ENCODE measurements at regions of chr12 and their contacts with region 1.

Region 1: DNA sequence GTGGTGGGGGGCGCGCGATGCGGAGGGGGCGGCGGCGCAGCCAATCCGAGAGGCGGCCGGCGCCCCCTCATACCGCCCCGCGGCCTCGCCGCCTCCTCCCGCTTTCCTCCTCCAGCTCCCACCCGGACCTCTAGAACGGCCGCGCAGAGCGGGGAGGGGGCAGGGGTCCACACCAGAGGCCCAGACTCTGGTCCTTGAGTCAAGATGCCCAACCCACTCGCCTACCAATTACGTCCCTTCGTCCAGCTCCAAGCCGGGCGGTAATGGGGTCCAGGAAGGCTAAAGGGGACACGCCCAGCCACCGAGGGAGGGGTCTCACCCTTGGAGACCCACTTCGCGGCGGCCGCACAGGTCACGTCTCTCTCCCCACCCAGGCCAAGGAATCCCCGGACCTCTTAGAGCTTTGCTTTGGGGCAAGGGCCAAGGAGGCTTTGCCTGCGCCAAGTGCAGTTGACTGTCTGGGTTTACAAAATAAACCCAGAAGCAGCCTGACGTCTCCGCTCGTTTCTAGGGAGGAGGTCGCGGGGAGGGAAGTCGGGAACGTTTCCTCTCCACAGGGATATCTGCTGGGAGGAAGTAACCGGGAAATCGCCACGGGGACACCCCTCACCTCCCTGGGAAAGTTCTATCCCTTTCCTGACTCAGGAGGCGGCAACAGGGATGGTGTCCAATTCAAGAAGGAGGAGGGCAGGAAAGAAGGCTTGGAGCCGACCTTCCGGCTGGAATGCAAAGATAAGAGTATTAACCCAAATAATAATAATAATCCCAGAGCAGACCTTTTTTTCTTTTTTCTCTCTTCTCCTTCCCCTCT is 427 bp upstream of the AMIGO2 start:
- DNase-seq: peak; percentile 55
- H3K4me3 Mint-ChIP-seq: peak overlapping the region; percentile 95
- H3K27ac Mint-ChIP-seq: peak overlapping the region; percentile 67
- H3K4me1 Mint-ChIP-seq: peaks cover 50% of the 10 kb centered on the region
- H3K27me3 Mint-ChIP-seq: no peaks in the 10 kb centered on the region
- CTCF ChIP-seq: no peak

Region 2: DNA sequence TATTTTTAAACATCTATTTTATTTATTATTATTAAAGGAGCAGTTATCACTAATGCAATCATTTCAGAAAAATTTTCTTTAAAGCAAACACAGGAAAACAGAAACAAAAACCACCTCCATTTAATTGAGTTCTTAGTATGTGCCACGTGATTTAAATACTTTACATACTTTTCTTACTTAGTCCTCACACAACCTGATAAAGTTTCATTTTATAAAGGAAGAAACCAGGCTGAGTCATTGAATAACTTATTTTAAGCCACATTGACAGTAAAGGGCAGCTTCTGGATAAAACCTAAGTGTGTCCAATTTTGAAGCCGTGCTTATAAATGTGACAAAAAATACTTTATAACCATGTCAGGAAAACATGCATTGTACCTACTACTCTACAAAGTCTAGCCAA is 57.9 kb before region 1 on chr12:
- CTCF ChIA-PET with region 1: no interaction called
- intact Hi-C with region 1: no loop called
- DNase-seq: no peak
- H3K4me3 Mint-ChIP-seq: no peak overlapping the region
- H3K27ac Mint-ChIP-seq: no peak overlapping the region
- H3K4me1 Mint-ChIP-seq: peaks cover 21% of the 10 kb centered on the region
- H3K27me3 Mint-ChIP-seq: no peaks in the 10 kb centered on the region
- CTCF ChIP-seq: no peak

Region 3: GRCh38 chr12:47147739-47148138 is 67.6 kb after region 1 on chr12:
- CTCF ChIA-PET with region 1: no interaction called
- intact Hi-C with region 1: no loop called
- DNase-seq: no peak
- H3K4me3 Mint-ChIP-seq: no peak overlapping the region
- H3K27ac Mint-ChIP-seq: no peak overlapping the region
- H3K4me1 Mint-ChIP-seq: no peaks in the 10 kb centered on the region
- H3K27me3 Mint-ChIP-seq: no peaks in the 10 kb centered on the region
- CTCF ChIP-seq: no peak

Region 4: DNA sequence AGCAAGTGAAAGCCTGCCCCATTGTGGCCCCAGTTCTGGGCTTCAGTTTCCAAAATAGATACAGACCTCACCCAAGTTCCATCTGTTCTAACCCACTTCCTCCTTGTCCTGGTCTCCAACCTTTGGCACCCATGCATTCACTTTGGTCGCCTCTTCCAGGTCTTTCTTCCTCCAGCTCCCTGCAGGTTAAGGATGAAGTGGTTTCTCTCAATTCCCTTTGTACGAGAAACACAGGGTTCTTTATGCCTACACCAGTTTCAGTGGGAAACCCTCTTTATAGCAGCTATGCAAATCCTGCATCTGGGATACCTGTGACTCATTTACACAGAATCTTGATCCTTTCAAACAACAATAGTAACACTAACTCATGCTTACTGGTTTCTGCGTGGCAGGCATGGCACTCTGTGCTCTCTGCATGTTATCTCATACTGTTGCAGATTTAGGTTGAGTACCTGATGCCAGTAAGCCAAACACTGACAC is 110.1 kb after region 1 on chr12:
- CTCF ChIA-PET with region 1: interaction called, 6 read pairs
- intact Hi-C with region 1: loop called (anchors 2 kb)
- DNase-seq: peak; percentile 42
- H3K4me3 Mint-ChIP-seq: peak overlapping the region; percentile 4
- H3K27ac Mint-ChIP-seq: peak overlapping the region; percentile 99
- H3K4me1 Mint-ChIP-seq: peaks cover 79% of the 10 kb centered on the region
- H3K27me3 Mint-ChIP-seq: no peaks in the 10 kb centered on the region
- CTCF ChIP-seq: no peak

Region 5: GRCh38 chr12:47276621-47277309 is 196.6 kb after region 1 on chr12:
- CTCF ChIA-PET with region 1: interaction called, 9 read pairs
- intact Hi-C with region 1: loop called (anchors 2 kb)
- DNase-seq: peak; percentile 64
- H3K4me3 Mint-ChIP-seq: peak overlapping the region; percentile 8
- H3K27ac Mint-ChIP-seq: peak overlapping the region; percentile 81
- H3K4me1 Mint-ChIP-seq: peaks cover 50% of the 10 kb centered on the region
- H3K27me3 Mint-ChIP-seq: no peaks in the 10 kb centered on the region
- CTCF ChIP-seq: no peak

Region 6: DNA sequence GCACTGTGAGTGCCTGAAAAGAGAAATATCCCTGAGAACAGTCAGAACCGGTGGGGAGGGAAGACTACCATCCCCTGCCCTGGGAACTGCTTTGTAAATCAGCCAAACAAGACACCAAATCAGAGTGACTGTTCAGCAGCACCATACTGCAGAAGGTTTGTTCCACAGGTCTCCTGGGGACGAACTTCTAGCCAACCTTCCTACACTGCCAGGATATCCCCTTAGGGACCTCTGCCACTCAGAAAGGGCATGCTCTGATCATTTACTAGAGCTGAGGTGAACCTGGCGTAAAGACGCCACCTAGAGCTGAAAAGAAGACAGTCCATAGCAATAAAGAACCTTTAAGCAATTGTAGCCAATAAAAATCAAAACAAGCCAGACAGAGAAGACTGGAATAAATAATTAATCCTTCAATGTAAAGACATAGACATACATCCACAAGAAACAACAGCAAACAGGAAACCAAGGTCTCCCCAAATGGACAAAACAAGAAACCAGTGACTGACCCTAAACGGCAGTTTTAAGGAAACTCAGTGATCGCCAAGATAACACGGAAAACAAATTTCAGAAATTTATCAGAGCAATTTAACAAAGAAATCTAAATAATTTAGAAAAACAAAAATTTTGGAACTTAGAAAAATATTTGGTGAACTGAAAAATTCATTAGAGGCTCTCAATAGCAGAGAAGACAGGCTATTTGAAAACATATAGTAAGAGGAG is 227.7 kb after region 1 on chr12:
- CTCF ChIA-PET with region 1: no interaction called
- intact Hi-C with region 1: loop called (anchors 5 kb)
- DNase-seq: peak; percentile 51
- H3K4me3 Mint-ChIP-seq: no peak overlapping the region
- H3K27ac Mint-ChIP-seq: peak overlapping the region; percentile 2
- H3K4me1 Mint-ChIP-seq: peaks cover 16% of the 10 kb centered on the region
- H3K27me3 Mint-ChIP-seq: no peaks in the 10 kb centered on the region
- CTCF ChIP-seq: peak; percentile 38

Region 7: DNA sequence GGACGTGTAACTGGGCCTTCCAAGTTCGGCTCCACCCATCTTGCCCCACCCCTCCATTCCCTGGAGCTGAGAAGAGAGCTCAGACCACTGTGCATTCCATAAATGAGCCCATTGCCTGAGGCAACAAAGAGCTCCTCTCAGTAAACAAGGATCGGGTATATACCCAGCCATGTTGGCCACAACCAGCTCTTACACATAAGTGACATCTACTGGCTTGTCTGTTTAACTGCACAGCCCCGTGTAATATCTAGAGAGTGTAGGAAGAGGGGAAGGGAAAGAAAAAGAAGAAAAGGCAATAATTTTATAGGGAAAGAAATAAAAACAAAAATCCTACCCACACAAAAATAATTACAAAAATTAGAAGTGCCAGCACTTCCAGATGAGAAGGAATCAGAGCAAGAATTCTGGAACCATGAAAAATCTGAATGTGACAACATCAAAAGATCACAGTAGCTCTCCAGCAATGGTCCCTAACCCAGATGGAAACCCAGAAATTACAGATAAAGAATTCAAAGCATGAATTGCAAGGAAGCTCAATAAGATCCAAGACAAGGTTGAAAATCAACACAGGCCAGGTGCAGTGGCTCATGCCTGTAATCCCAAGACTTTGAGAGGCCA is 317.6 kb after region 1 on chr12:
- CTCF ChIA-PET with region 1: no interaction called
- intact Hi-C with region 1: loop called (anchors 2 kb)
- DNase-seq: peak; percentile 30
- H3K4me3 Mint-ChIP-seq: no peak overlapping the region
- H3K27ac Mint-ChIP-seq: peak overlapping the region; percentile 60
- H3K4me1 Mint-ChIP-seq: peaks cover 8% of the 10 kb centered on the region
- H3K27me3 Mint-ChIP-seq: no peaks in the 10 kb centered on the region
- CTCF ChIP-seq: no peak

Measured in Calu3 (cell line).